ENCODE measurements at regions of chr10 and their contacts with region 1.

Region 1: GRCh38 chr10:117320050-117320665 is 55.1 kb downstream of the PDZD8 start:
- DNase-seq: peak in 11 of 42 donors; percentile 2 to 49 (median 22)

Region 2: DNA sequence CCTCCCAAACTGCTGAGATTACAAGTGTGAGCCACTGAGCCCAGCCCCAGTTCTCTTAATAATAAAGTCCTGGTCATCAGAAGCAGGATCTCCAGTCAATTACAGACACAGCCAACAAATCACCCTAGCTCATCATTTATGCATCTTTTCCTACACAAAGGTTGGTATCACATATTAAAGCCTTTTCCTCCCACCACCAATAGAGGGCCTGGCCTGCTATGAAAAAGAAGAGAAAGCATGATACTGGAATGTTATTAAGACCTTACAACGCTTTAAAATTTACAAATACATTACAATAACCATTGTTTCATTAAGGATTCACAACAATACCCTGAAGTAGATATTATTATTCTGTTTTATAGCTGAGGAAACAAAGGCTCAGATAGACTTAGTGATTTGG is 207.9 kb before region 1 on chr10:
- intact Hi-C with region 1: no loop called
- DNase-seq: peak in 5 of 42 donors; percentile 8 to 59 (median 39)

Region 3: GRCh38 chr10:117216611-117217195 is 103.5 kb before region 1 on chr10:
- intact Hi-C with region 1: loop called (anchors 5 kb)
- DNase-seq: peak; percentile 9 to 89 (median 74)

Measured in head of caudate nucleus (tissue), 42 donors.